ENCODE measurements at regions of chr2 and their contacts with region 1.

Region 1: GRCh38 chr2:177296040-177296439 is 31.5 kb upstream of the NFE2L2 start:
- DNase-seq: no peak
- ATAC-seq: peak; percentile 63
- H3K4me3 Mint-ChIP-seq: no peak overlapping the region
- H3K27ac Mint-ChIP-seq: peak overlapping the region; percentile 39
- H3K4me1 Mint-ChIP-seq: peaks cover 36% of the 10 kb centered on the region
- H3K27me3 Mint-ChIP-seq: no peaks in the 10 kb centered on the region

Region 2: GRCh38 chr2:177239932-177240630 is 56.0 kb before region 1 on chr2:
- CTCF ChIA-PET with region 1: interaction called, 12 read pairs
- DNase-seq: peak; percentile 77
- ATAC-seq: peak; percentile 95
- H3K4me3 Mint-ChIP-seq: peak overlapping the region; percentile 34
- H3K27ac Mint-ChIP-seq: peak overlapping the region; percentile 88
- H3K4me1 Mint-ChIP-seq: peaks cover 65% of the 10 kb centered on the region
- H3K27me3 Mint-ChIP-seq: no peaks in the 10 kb centered on the region

Region 3: DNA sequence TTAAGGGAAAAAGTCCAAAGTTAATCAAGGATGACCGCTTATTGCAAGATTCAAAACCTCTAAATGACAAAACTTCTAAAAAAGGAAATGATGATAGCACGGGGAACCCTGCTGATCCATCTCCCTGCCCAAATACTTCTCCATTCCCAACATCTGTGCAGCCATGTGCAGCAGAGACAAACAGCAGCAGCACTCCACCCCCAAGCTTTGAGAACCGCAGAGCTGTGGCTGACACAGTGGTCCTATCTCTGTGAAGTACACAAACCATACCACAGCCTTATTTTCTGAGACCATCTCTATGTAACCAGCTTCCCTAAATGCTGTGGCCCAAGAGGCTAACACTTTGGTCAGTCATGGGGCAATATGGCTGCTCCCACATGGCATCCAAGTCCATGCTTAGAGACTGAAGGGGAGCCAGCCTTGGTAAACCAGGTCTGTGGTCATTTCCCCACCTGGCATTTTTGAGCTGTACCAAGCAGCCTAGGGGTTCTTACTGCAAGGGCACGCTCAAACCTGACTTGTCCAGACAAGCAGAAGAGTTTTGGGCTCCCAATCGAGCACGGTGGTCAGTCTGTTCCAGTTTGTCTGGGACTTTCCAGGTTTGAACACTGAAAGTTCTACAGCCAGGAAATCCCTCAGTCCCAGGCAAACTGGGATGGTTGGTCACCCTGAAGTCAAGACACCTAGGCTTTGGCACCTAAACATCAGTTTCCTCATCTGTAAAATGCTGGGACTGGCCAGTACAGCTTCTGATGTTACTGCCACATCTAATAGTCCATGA is 14.4 kb before region 1 on chr2:
- CTCF ChIA-PET with region 1: interaction called, 12 read pairs
- DNase-seq: no peak
- ATAC-seq: peak; percentile 23
- H3K4me3 Mint-ChIP-seq: no peak overlapping the region
- H3K27ac Mint-ChIP-seq: no peak overlapping the region
- H3K4me1 Mint-ChIP-seq: peaks cover 38% of the 10 kb centered on the region
- H3K27me3 Mint-ChIP-seq: no peaks in the 10 kb centered on the region

Region 4: DNA sequence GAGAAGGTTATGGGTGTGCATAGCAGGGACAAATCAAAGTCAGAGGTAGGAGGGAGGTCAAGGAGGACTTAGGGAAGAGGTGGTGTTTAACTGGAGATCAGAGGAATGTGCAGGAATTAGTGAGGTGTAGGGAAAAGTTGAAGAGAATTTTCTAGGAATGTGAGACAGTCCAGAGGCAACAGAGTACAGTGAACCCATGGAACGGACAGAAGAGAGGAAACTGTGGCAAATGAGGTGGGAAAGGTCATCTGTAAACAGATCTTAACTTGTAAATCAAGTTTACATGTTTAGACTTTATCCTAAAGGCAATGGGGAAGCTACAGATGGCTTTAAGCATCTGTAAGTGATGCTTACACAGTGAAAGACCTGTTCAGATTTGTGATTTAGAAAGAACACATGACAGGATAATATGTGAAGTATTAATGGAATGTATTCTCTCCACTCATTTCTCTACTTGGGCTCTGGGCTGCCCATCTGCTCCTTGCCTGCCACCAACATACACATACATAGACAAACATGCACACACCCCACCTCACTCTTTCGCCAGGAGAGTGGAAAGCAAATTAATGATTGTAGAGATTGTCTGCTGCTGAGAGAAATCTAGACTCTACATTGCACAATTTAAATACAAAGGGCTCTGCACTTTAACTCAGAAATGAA is 29.4 kb after region 1 on chr2:
- CTCF ChIA-PET with region 1: no interaction called
- DNase-seq: no peak
- ATAC-seq: no peak
- H3K4me3 Mint-ChIP-seq: no peak overlapping the region
- H3K27ac Mint-ChIP-seq: no peak overlapping the region
- H3K4me1 Mint-ChIP-seq: no peaks in the 10 kb centered on the region
- H3K27me3 Mint-ChIP-seq: no peaks in the 10 kb centered on the region

Region 5: DNA sequence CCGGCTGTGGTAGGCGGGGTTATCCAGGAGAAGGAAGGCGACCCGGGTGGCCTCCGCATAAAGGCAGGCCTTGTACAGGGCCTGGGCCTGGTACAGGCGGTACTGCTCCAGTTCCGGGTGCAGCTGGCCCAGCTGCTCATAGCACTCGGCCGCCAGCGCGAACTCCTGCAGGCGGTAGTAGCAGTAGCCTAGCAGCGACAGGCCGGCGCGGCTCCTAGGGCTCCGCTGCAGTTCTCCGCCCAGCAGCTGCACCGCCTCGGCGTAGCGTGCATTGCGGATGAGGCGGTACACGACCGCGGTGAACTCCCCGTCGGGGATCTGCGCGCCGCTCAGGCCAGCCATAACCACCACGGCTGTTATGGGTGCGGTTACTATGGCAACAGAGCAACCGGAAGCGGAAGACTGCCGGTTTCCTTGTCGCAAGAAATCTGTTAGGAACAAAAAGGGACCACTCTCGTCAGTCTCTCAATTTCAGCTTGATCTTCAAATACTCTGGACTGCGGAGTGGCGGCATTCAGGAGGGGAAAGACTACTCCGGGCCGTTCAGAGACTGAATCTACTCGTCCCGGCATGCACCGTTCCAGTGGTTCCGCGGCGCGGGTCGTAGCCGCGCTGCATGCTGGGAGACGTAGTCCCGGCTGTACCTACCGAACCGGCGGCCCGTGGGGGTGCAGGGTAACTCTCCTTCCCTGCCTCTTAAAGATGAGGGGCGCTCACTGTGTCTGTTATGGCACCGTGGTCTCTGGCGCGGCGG is 256.6 kb after region 1 on chr2:
- CTCF ChIA-PET with region 1: no interaction called
- DNase-seq: peak; percentile 94
- ATAC-seq: peak; percentile 94
- H3K4me3 Mint-ChIP-seq: peak overlapping the region; percentile 98
- H3K27ac Mint-ChIP-seq: peak overlapping the region; percentile 96
- H3K4me1 Mint-ChIP-seq: peaks cover 26% of the 10 kb centered on the region
- H3K27me3 Mint-ChIP-seq: no peaks in the 10 kb centered on the region